WTC11 (cell line): ENCODE measurements at regions of chr1 and their contacts with region 1.

Region 1: GRCh38 chr1:227952374-227953021 is 4.8 kb upstream of the WNT9A start:
- DNase-seq: no peak
- ATAC-seq: no peak
- H3K4me3 Mint-ChIP-seq: no peak overlapping the region
- H3K27ac Mint-ChIP-seq: no peak overlapping the region
- H3K4me1 Mint-ChIP-seq: peaks cover 4% of the 10 kb centered on the region
- H3K27me3 Mint-ChIP-seq: peaks cover 39% of the 10 kb centered on the region
- CTCF ChIP-seq: no peak

Region 2: GRCh38 chr1:227449051-227449450 is 503.4 kb before region 1 on chr1:
- CTCF ChIA-PET with region 1: interaction called, 19 read pairs
- POLR2A ChIA-PET with region 1: no interaction called
- DNase-seq: peak; percentile 65
- ATAC-seq: peak; percentile 90
- H3K4me3 Mint-ChIP-seq: no peak overlapping the region
- H3K27ac Mint-ChIP-seq: no peak overlapping the region
- H3K4me1 Mint-ChIP-seq: peaks cover 4% of the 10 kb centered on the region
- H3K27me3 Mint-ChIP-seq: peaks cover 5% of the 10 kb centered on the region; the same call in 1 of the 2 replicates
- CTCF ChIP-seq: no peak

Region 3: GRCh38 chr1:227729881-227730627 is 222.4 kb before region 1 on chr1:
- CTCF ChIA-PET with region 1: interaction called, 20 read pairs
- POLR2A ChIA-PET with region 1: no interaction called
- DNase-seq: peak; percentile 74
- ATAC-seq: peak; percentile 27
- H3K4me3 Mint-ChIP-seq: peak overlapping the region; percentile 90
- H3K27ac Mint-ChIP-seq: peak overlapping the region; percentile 83
- H3K4me1 Mint-ChIP-seq: peaks cover 34% of the 10 kb centered on the region
- H3K27me3 Mint-ChIP-seq: peaks cover 13% of the 10 kb centered on the region
- CTCF ChIP-seq: peak; percentile 68

Region 4: DNA sequence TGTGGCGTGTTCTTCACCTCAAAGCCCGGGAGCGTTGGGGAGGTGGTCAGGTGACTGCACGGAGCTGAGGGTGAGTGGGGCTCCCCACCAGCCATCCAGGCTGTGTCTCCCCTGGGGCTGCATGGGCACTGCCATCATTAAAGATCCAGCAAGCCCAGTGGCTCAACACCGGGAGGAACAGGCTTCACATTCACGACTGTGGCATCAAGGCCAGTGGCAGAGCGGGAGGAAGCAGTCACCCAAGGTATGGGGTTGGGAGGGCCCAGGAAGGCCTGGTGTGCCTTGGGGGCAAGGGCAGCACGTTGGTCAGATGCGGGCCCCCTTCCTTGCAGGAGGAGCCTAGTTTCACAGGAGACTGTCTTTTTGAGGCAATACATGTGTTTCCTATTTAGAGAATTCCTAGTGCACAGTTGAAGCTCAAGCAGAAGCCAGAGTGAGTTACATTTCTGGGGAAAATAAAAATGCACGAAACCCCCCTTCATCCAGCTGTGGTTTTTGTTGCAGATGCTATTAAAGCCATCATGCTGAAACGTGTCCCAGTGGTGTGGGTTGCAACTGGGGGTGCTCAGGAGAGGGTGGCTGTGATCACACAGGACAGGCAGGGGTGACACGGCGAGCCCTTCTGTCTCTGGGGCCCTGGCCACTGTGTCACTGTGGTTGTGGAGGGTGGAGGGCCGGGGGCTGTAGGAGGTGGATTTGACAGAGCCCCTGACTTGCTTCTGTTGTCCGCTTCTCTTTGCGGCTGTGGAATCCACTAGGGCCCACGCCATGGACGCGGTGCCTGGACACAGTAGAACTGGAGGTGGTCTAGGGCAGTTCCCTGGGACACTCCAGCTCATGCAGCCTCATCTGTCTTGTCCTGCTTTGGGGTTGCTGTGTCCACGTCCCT is 183.2 kb before region 1 on chr1:
- CTCF ChIA-PET with region 1: interaction called, 10 read pairs
- POLR2A ChIA-PET with region 1: no interaction called
- DNase-seq: no peak
- ATAC-seq: no peak
- H3K4me3 Mint-ChIP-seq: no peak overlapping the region
- H3K27ac Mint-ChIP-seq: no peak overlapping the region
- H3K4me1 Mint-ChIP-seq: no peaks in the 10 kb centered on the region
- H3K27me3 Mint-ChIP-seq: no peaks in the 10 kb centered on the region
- CTCF ChIP-seq: no peak

Region 5: GRCh38 chr1:227787513-227788270 is 164.8 kb before region 1 on chr1:
- CTCF ChIA-PET with region 1: interaction called, 42 read pairs
- POLR2A ChIA-PET with region 1: no interaction called
- DNase-seq: peak; percentile 95
- ATAC-seq: peak; percentile 90
- H3K4me3 Mint-ChIP-seq: peak overlapping the region; percentile 77
- H3K27ac Mint-ChIP-seq: no peak overlapping the region
- H3K4me1 Mint-ChIP-seq: peaks cover 9% of the 10 kb centered on the region
- H3K27me3 Mint-ChIP-seq: peaks cover 50% of the 10 kb centered on the region
- CTCF ChIP-seq: no peak

Region 6: GRCh38 chr1:227913764-227914721 is 38.5 kb before region 1 on chr1:
- CTCF ChIA-PET with region 1: interaction called, 12 read pairs
- POLR2A ChIA-PET with region 1: no interaction called
- DNase-seq: no peak
- ATAC-seq: peak; percentile 18
- H3K4me3 Mint-ChIP-seq: no peak overlapping the region
- H3K27ac Mint-ChIP-seq: no peak overlapping the region
- H3K4me1 Mint-ChIP-seq: peaks cover 21% of the 10 kb centered on the region
- H3K27me3 Mint-ChIP-seq: no peaks in the 10 kb centered on the region
- CTCF ChIP-seq: no peak

Region 7: DNA sequence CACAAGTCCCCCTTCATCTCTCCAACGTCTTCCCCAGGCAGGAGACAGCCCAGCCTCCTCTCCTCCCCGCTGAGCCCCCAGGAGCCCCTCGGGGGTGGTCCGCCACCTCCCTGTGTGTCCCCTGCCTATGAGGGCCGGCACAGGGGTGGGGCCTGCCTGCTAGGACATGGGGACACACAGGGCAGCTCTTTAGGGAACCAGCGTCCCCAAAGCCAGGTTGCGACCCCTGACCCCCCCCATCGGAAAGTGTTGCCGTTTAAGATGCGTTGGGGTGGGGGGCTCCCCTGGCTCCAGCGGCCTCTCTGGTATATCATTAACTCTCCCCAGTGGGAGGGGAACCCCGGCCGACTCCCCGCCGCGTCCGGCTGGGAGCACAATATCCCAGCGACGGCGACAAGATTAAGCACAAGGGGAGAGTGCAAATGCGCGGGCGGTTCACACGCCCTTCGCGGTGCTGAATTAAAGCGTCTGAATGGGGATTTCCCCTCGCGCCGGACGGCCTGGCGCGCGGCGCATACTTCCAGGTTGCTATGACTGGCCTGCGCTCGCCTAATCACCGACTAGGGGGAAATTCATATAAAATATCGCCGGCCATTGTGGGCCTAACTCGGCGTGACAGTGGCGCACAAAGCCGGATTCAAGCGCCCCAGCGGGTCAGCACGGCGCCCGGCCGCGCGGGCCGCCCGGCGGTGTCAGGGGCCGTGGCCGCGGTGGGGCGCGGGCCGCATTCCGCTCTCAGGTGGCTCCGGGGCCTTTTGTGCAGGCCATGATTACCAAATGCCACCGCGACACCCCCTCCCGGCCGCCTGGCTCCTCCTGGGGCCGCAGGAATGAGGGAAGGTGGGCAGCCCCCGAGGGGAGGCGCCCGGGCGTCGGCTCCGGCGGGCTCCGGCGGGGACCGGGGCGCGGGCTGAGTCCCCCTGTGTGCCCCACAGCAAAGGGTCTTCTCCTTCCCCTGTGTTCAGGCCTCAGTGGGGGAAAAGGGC is 85.2 kb after region 1 on chr1:
- CTCF ChIA-PET with region 1: no interaction called
- POLR2A ChIA-PET with region 1: no interaction called
- DNase-seq: peak; percentile 51
- ATAC-seq: peak; percentile 72
- H3K4me3 Mint-ChIP-seq: peak overlapping the region; percentile 65
- H3K27ac Mint-ChIP-seq: no peak overlapping the region
- H3K4me1 Mint-ChIP-seq: 0 out of 2 replicates have a peak, but pooled peaks cover 2% of the 10 kb centered on the region
- H3K27me3 Mint-ChIP-seq: peaks cover 26% of the 10 kb centered on the region
- CTCF ChIP-seq: no peak